ENCODE measurements at regions of chr2 and their contacts with region 1.

Region 1: GRCh38 chr2:119482481-119483394 is 41.5 kb downstream of the SCTR start:
- DNase-seq: peak; percentile 46
- ATAC-seq: peak; percentile 34 to 63

Region 2: GRCh38 chr2:119371111-119371510 is 111.6 kb before region 1 on chr2:
- intact Hi-C with region 1: no loop called
- DNase-seq: no peak
- ATAC-seq: no peak

Region 3: GRCh38 chr2:119397196-119397595 is 85.5 kb before region 1 on chr2:
- intact Hi-C with region 1: loop called in 1 of 2 experiments (anchors 5 kb)
- DNase-seq: no peak
- ATAC-seq: no peak